ENCODE measurements at regions of chr7 and their contacts with region 1.

Region 1: GRCh38 chr7:106041140-106041717 is 70.9 kb downstream of the SYPL1 start:
- DNase-seq: peak; percentile 30
- H3K4me3 ChIP-seq: no peak overlapping the region
- H3K27ac ChIP-seq: no peak overlapping the region
- H3K4me1 ChIP-seq: peaks cover 18% of the 10 kb centered on the region
- H3K27me3 ChIP-seq: no peaks in the 10 kb centered on the region
- CTCF ChIP-seq: peak; percentile 34 to 55 (median 43)
- POLR2A ChIP-seq: no peak

Region 2: DNA sequence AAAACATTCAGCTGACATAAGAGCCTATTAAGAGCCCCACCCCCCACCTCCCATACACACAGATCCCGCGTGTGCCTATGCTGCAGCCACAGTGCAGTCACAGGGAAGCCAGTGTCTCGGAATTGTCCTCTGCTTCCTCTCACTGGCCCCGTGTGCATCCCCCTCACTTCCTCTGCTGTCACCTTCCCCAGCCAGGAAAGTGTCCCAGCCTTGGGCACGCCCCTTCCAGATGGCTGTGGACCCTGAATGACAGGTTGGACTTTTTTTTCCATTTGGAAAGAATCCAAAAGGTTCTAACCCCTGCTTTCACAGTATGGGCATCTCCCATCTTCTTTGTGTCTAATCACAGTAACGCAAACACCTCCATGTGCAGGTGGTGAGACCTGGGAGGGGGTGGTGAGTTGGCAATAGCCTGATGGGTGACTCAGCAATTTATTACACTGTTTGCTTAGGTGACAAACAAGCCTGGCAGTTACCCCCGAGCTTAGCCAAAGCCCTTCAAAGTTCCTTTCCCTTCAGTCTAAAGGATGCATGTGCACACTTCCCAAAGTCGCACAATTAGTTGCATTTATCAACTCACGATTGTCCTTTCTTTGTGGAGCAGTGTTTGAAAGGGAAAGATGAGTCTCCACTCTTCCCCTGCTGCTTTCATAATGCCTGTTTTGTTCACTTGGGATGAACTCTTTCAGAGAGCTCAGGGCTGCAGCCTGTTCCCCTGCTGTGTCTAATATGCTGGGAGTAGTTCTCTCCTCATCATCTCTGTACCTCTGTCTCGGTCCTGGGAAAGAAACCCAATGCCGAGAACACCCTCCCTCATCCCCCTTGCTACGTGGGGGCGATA is 392.4 kb before region 1 on chr7:
- intact Hi-C with region 1: loop called (anchors 5 kb)
- DNase-seq: no peak
- H3K4me3 ChIP-seq: no peak overlapping the region
- H3K27ac ChIP-seq: no peak overlapping the region
- H3K4me1 ChIP-seq: peaks cover 7% of the 10 kb centered on the region
- H3K27me3 ChIP-seq: no peaks in the 10 kb centered on the region
- CTCF ChIP-seq: no peak
- POLR2A ChIP-seq: no peak

Region 3: DNA sequence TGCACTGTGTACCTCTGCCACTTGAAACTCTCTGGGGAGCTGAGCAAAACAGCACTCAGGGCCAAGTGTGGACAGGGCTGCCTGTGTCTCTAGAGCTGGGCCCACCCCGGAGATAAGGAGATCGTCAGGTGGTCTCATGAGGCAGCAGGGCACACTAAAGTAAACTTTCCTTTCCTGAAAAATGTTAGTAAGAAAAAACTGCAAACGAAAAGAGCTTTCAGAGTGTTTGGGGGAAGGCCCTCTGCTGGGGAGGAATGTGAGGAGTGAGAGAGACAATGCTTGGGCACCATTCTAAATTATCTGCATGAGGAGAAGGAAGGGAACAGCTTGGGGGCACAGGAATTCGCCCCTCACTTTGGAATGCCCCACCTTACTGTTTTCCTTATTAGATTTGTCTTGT is 292.5 kb before region 1 on chr7:
- intact Hi-C with region 1: no loop called
- DNase-seq: no peak
- H3K4me3 ChIP-seq: no peak overlapping the region
- H3K27ac ChIP-seq: no peak overlapping the region
- H3K4me1 ChIP-seq: no peaks in the 10 kb centered on the region
- H3K27me3 ChIP-seq: no peaks in the 10 kb centered on the region
- CTCF ChIP-seq: no peak
- POLR2A ChIP-seq: no peak

Region 4: GRCh38 chr7:105759670-105760550 is 281.3 kb before region 1 on chr7:
- intact Hi-C with region 1: loop called (anchors 10 kb)
- DNase-seq: peak; percentile 72
- H3K4me3 ChIP-seq: no peak overlapping the region
- H3K27ac ChIP-seq: no peak overlapping the region
- H3K4me1 ChIP-seq: no peaks in the 10 kb centered on the region
- H3K27me3 ChIP-seq: no peaks in the 10 kb centered on the region
- CTCF ChIP-seq: peak; percentile 40 to 57 (median 52)
- POLR2A ChIP-seq: no peak

Measured in testis (tissue), 5 donors.